ENCODE measurements at regions of chrX and their contacts with region 1.

Region 1: DNA sequence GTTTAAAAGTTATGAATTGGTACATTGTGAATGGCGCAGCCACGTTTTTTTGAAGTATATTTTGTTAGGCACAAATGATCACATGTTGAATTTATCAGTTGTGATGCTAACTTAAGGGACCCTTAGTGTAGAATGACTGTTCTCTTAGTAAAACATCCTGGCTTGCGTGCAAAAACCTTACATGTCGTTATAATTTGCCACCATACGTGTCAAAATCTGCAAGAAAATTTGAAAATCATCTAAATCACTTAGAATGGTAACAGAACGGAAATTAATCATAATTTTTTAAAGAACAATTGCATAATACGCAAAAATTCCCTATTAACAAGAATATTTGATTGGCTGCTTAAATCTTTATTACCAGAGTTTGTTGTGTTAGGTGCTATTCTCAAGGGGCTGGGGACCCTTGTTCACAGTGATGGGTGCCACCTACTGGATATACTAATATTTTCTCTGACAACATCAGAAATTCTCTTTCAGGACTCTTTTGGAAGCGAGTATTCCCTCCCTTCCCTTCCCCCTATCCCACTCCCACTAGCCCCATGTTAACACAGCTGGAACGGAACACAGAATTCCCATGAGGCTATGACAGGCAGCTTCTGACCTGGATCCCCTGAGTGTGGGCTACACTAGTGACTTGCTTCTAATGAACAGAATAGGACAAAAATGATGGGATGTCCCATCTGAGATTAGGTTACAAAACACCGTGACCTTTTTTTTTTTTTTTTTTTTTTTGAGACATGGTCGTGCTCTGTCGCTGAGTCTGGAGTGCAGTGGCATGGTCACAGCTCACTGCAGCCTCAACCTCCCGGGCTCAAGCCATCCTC is 71.8 kb downstream of the SUPT20HL2 start:
- DNase-seq: no peak
- ATAC-seq: peak; percentile 67
- H3K4me3 ChIP-seq: no peak overlapping the region
- H3K27ac ChIP-seq: no peak overlapping the region
- H3K4me1 ChIP-seq: peaks cover 10 to 17% of the 10 kb centered on the region in 2 experiments
- H3K27me3 ChIP-seq: no peaks in the 10 kb centered on the region
- CTCF ChIP-seq: peak; percentile 19 to 50 (median 48); a peak in 4 of 6 replicates
- POLR2A ChIP-seq: no peak
- RAD21 ChIP-seq: peak; percentile 63

Region 2: DNA sequence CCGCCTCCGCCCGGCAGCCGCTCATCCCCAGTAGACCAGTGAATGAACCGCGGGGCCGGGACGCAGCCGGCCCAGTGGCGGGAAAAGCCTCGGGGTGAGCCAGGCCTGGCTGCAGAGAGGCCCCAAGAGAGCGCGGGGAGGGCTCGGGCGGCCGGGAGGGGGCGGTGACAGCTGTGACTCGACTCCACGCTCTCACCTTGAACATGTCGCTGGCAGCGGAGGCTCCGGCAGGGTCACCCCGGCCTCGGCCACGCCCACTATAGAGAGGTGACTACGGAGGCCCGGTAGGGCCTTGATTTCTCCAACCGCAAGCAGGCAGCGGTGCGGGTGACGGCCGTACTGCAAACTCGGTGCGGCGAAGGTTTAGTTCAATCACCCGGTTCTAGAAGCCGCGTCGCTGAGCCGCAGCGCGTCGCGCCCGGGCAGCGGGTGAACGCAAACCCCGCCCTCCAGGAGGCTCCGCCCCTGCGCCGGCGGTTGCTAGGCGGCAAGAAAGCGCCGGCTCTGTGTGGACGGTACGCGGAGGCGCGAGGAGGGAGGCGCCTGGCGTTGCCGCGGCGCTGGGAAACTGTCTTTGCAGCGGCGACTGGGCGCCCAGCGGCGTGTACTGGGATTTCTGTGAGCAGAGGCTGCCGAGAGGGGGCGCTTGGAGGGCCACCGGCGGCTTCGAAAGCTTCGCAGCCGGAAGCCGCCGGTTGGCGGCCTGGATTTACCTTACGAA is 334.4 kb before region 1 on chrX and contains the starts of genes APOO and CXorf58:
- CTCF ChIA-PET with region 1: no interaction called
- POLR2A ChIA-PET with region 1: no interaction called
- RAD21 ChIA-PET with region 1: no interaction called
- intact Hi-C with region 1: loop called (anchors 5 kb)
- DNase-seq: peak; percentile 83
- ATAC-seq: peak; percentile 93
- H3K4me3 ChIP-seq: peak within 1 kb of the TSS; percentile 76
- H3K27ac ChIP-seq: peak within 1 kb of the TSS; percentile 74
- H3K4me1 ChIP-seq: peaks cover 0 to 15% of the 10 kb centered on the region in 2 experiments; a peak in 2 of 4 replicates
- H3K27me3 ChIP-seq: no peaks in the 10 kb centered on the region
- CTCF ChIP-seq: peak in 2 of 3 experiments; percentile 66 to 80; a peak in 4 of 6 replicates
- POLR2A ChIP-seq: no peak
- RAD21 ChIP-seq: no peak
- total RNA-seq, gene APOO: 34.5 TPM
- total RNA-seq, gene CXorf58: not detected

Region 3: GRCh38 chrX:24081661-24082264 is 160.3 kb before region 1 on chrX:
- CTCF ChIA-PET with region 1: interaction called, 3 read pairs
- POLR2A ChIA-PET with region 1: no interaction called
- RAD21 ChIA-PET with region 1: no interaction called
- intact Hi-C with region 1: loop called (anchors 2 kb)
- DNase-seq: peak; percentile 50
- ATAC-seq: peak; percentile 83
- H3K4me3 ChIP-seq: no peak overlapping the region
- H3K27ac ChIP-seq: peak overlapping the region; percentile 42; the same call in 1 of the 2 replicates
- H3K4me1 ChIP-seq: peaks cover 3 to 20% of the 10 kb centered on the region in 2 experiments; a peak in 3 of 4 replicates
- H3K27me3 ChIP-seq: no peaks in the 10 kb centered on the region
- CTCF ChIP-seq: peak; percentile 26 to 81 (median 48)
- POLR2A ChIP-seq: no peak
- RAD21 ChIP-seq: peak; percentile 59

Region 4: GRCh38 chrX:24133280-24133679 is 108.8 kb before region 1 on chrX:
- CTCF ChIA-PET with region 1: no interaction called
- POLR2A ChIA-PET with region 1: no interaction called
- RAD21 ChIA-PET with region 1: no interaction called
- intact Hi-C with region 1: no loop called
- DNase-seq: no peak
- ATAC-seq: no peak
- H3K4me3 ChIP-seq: no peak overlapping the region
- H3K27ac ChIP-seq: no peak overlapping the region
- H3K4me1 ChIP-seq: no peaks in the 10 kb centered on the region
- H3K27me3 ChIP-seq: no peaks in the 10 kb centered on the region
- CTCF ChIP-seq: no peak
- POLR2A ChIP-seq: no peak
- RAD21 ChIP-seq: no peak

Region 5: GRCh38 chrX:24466025-24466424 is 224.0 kb after region 1 on chrX:
- CTCF ChIA-PET with region 1: no interaction called
- POLR2A ChIA-PET with region 1: no interaction called
- RAD21 ChIA-PET with region 1: no interaction called
- intact Hi-C with region 1: no loop called
- DNase-seq: no peak
- ATAC-seq: no peak
- H3K4me3 ChIP-seq: peak overlapping the region; percentile 52 to 64
- H3K27ac ChIP-seq: no peak overlapping the region
- H3K4me1 ChIP-seq: peaks cover 2 to 7% of the 10 kb centered on the region in 2 experiments; a peak in 2 of 4 replicates
- H3K27me3 ChIP-seq: no peaks in the 10 kb centered on the region
- CTCF ChIP-seq: no peak
- POLR2A ChIP-seq: no peak
- RAD21 ChIP-seq: no peak

Region 6: DNA sequence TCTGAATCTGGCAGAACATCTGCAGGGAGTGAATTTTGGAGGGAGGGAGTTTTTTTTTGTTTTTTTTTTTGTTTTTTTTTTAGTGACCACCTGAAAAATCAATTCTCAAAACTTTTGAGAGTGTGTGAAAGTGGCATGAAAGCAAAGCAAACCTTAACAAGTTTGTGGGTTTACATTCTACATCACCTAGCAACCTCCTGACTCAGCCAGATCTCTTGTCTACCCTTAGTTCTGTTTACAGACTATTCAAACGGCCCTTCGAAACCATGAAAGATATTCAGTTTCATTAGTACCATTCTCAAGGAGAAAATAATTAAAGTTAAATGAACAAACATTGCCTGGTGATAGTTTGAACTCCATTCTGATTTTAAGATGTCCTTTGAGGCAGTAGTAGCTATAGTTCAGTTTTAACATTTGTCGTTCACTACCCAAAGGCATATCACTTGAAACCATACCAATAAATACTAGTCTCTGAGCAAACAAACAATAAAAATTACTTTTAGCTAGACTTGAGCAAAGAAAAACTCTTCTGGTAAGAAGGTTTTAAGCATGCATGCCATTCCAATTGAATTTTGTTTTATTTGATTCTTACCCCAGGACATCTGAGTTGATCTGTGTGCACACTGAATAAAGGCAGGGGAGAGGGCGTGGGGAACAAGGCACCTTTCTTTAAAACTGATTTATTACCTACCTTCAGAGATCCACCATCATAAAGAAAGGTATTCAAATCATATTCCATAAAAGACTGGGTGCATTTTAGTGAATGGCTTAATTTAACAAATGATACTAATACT is 636.0 kb after region 1 on chrX:
- CTCF ChIA-PET with region 1: no interaction called
- POLR2A ChIA-PET with region 1: no interaction called
- RAD21 ChIA-PET with region 1: no interaction called
- intact Hi-C with region 1: no loop called
- DNase-seq: no peak
- ATAC-seq: no peak
- H3K4me3 ChIP-seq: no peak overlapping the region
- H3K27ac ChIP-seq: no peak overlapping the region
- H3K4me1 ChIP-seq: no peaks in the 10 kb centered on the region
- H3K27me3 ChIP-seq: no peaks in the 10 kb centered on the region
- CTCF ChIP-seq: no peak
- POLR2A ChIP-seq: no peak
- RAD21 ChIP-seq: no peak

Measured in HCT116 (cell line).